KBM-7 (cell line): ENCODE measurements at regions of chr6 and their contacts with region 1.

Region 1: DNA sequence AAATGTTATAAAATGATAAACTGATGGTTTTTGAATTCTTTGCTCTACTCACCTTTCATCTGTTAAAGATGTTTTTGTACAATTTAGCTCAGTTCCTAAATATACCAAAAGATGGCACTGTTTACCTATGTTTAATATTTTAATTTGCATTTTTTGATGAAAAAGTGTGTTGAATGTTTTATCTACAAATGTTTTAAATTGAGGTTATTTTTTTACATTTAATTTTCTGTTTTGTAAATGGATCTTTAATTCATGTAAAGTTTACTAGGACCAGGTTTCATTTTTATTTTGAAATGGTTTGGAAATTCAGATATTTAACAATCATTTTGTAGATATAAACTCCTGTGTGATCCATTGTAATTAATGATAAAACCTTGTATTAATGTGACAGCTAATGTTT is 30.0 kb downstream of the CDKAL1 start:
- DNase-seq: peak; percentile 67

Region 2: DNA sequence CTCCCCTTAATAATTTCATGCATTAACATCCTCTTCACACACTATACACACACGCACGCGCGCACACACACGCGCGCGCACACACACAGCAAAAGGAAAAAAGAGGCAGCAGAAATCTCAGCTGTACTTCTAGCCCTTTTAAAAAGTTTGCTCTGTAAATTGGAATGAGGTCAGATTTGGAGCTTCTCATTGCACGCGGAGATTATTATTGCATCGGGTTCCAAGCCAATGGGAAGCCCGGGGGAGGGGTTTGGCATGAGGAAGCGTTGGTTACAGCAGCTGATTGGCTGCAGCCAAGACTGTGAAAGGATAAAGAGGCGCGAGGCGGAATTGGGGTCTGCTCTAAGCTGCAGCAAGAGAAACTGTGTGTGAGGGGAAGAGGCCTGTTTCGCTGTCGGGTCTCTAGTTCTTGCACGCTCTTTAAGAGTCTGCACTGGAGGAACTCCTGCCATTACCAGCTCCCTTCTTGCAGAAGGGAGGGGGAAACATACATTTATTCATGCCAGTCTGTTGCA is 1029.2 kb after region 1 on chr6 and contains the start of gene SOX4:
- in situ Hi-C with region 1: loop called (anchors 25 kb)
- DNase-seq: peak; percentile 97